ENCODE measurements at regions of chr10 and their contacts with region 1.

Region 1: DNA sequence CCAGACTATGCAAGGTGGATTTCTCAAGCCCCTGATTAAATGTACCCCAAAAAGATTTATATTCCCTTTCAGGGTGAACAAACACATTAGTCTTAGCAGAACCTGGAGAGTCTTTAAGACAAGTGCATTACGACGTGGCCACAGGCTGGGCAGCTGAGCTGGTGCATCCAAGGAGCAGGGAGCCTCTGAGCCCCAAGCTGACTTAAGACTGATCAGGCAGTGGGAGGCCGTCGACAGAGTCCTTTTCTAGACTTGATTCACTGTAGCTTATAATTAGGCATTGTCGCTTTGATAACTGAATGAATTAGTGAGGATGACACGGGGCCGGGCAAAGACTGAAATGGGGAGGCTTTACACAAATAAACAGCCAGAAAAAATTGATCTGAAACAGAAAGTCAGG is 353.2 kb downstream of the GPAM start:
- DNase-seq: no peak
- H3K4me3 ChIP-seq: no peak overlapping the region
- H3K4me3 Mint-ChIP-seq: no peak overlapping the region
- H3K27ac ChIP-seq: no peak overlapping the region
- H3K27ac Mint-ChIP-seq: no peak overlapping the region
- H3K4me1 ChIP-seq: no peaks in the 10 kb centered on the region
- H3K4me1 Mint-ChIP-seq: no peaks in the 10 kb centered on the region
- H3K27me3 ChIP-seq: no peaks in the 10 kb centered on the region
- H3K27me3 Mint-ChIP-seq: no peaks in the 10 kb centered on the region

Region 2: GRCh38 chr10:111316722-111317212 is 513.6 kb before region 1 on chr10:
- CTCF ChIA-PET with region 1: no interaction called
- POLR2A ChIA-PET with region 1: no interaction called
- intact Hi-C with region 1: loop called (anchors 5 kb)
- DNase-seq: no peak
- H3K4me3 ChIP-seq: no peak overlapping the region
- H3K4me3 Mint-ChIP-seq: no peak overlapping the region
- H3K27ac ChIP-seq: no peak overlapping the region
- H3K27ac Mint-ChIP-seq: no peak overlapping the region
- H3K4me1 ChIP-seq: no peaks in the 10 kb centered on the region
- H3K4me1 Mint-ChIP-seq: peaks cover 0 to 1% (median 0%) of the 10 kb centered on the region in 4 donors
- H3K27me3 ChIP-seq: no peaks in the 10 kb centered on the region
- H3K27me3 Mint-ChIP-seq: peaks cover 21 to 23% of the 10 kb centered on the region in 2 donors

Region 3: GRCh38 chr10:111677759-111678158 is 152.6 kb before region 1 on chr10:
- CTCF ChIA-PET with region 1: no interaction called
- POLR2A ChIA-PET with region 1: no interaction called
- intact Hi-C with region 1: no loop called
- DNase-seq: no peak
- H3K4me3 ChIP-seq: no peak overlapping the region
- H3K4me3 Mint-ChIP-seq: no peak overlapping the region
- H3K27ac ChIP-seq: no peak overlapping the region
- H3K27ac Mint-ChIP-seq: no peak overlapping the region
- H3K4me1 ChIP-seq: no peaks in the 10 kb centered on the region
- H3K4me1 Mint-ChIP-seq: no peaks in the 10 kb centered on the region
- H3K27me3 ChIP-seq: no peaks in the 10 kb centered on the region
- H3K27me3 Mint-ChIP-seq: peaks cover 0 to under 1% of the 10 kb centered on the region in 2 donors

Region 4: GRCh38 chr10:111872591-111872990 is 42.2 kb after region 1 on chr10:
- CTCF ChIA-PET with region 1: no interaction called
- POLR2A ChIA-PET with region 1: no interaction called
- intact Hi-C with region 1: no loop called
- DNase-seq: no peak
- H3K4me3 ChIP-seq: no peak overlapping the region
- H3K4me3 Mint-ChIP-seq: no peak overlapping the region
- H3K27ac ChIP-seq: no peak overlapping the region
- H3K27ac Mint-ChIP-seq: no peak overlapping the region
- H3K4me1 ChIP-seq: no peaks in the 10 kb centered on the region
- H3K4me1 Mint-ChIP-seq: no peaks in the 10 kb centered on the region
- H3K27me3 ChIP-seq: no peaks in the 10 kb centered on the region
- H3K27me3 Mint-ChIP-seq: peaks cover 0 to 2% of the 10 kb centered on the region in 2 donors